GM12878 (cell line): ENCODE measurements at regions of chr3 and their contacts with region 1.

Region 1: GRCh38 chr3:98188545-98188944 is 22.0 kb downstream of the OR5H15 start:
- DNase-seq: peak; percentile 53
- ATAC-seq: peak; percentile 99
- H3K4me3 ChIP-seq: no peak overlapping the region
- H3K27ac ChIP-seq: no peak overlapping the region
- H3K4me1 ChIP-seq: no peaks in the 10 kb centered on the region
- H3K27me3 ChIP-seq: no peaks in the 10 kb centered on the region; a peak in 1 of 4 replicates
- CTCF ChIP-seq: peak; percentile 55 to 68 (median 68)
- EP300 ChIP-seq: no peak
- POLR2A ChIP-seq: no peak
- RAD21 ChIP-seq: peak; percentile 66

Region 2: DNA sequence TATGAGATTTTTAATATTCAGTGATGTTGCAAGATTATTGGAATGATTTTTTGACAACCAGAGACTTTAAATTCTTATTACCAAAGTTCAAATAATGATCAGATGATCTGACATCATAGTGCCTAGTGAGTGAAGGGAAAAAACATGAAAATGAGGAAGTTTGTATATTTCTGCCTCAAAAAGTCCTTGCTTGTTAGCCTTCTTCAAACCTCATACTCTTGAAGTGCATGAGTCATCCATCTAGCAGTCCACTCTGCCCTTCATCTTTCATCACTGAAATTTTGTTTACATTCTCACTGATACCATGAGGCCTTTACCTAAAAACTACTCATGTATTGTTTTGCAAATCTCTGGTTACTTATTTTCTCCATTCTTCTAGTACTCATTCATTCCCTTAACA is 51.6 kb after region 1 on chr3:
- CTCF ChIA-PET with region 1: interaction called, 8 read pairs
- POLR2A ChIA-PET with region 1: no interaction called
- RAD21 ChIA-PET with region 1: no interaction called
- SMC1A ChIA-PET with region 1: interaction called, 4 read pairs
- in situ Hi-C with region 1: no loop called
- intact Hi-C with region 1: loop called (anchors 2 kb)
- DNase-seq: no peak
- ATAC-seq: peak; percentile 85
- H3K4me3 ChIP-seq: no peak overlapping the region
- H3K27ac ChIP-seq: no peak overlapping the region
- H3K4me1 ChIP-seq: no peaks in the 10 kb centered on the region; the same call in 1 of the 2 replicates
- H3K27me3 ChIP-seq: no peaks in the 10 kb centered on the region
- CTCF ChIP-seq: no peak
- EP300 ChIP-seq: no peak
- POLR2A ChIP-seq: no peak
- RAD21 ChIP-seq: no peak

Region 3: GRCh38 chr3:98343647-98344507 is 155.3 kb after region 1 on chr3:
- CTCF ChIA-PET with region 1: interaction called, 18 read pairs
- POLR2A ChIA-PET with region 1: no interaction called
- RAD21 ChIA-PET with region 1: no interaction called
- SMC1A ChIA-PET with region 1: interaction called, 10 read pairs
- in situ Hi-C with region 1: no loop called
- intact Hi-C with region 1: no loop called
- DNase-seq: no peak
- ATAC-seq: peak; percentile 92
- H3K4me3 ChIP-seq: no peak overlapping the region
- H3K27ac ChIP-seq: no peak overlapping the region
- H3K4me1 ChIP-seq: no peaks in the 10 kb centered on the region
- H3K27me3 ChIP-seq: no peaks in the 10 kb centered on the region
- CTCF ChIP-seq: peak; percentile 70 to 84 (median 80)
- EP300 ChIP-seq: no peak
- POLR2A ChIP-seq: no peak
- RAD21 ChIP-seq: peak; percentile 67